ENCODE measurements at regions of chr5 and their contacts with region 1.

Region 1: GRCh38 chr5:112995764-112996618 is 19.4 kb downstream of the DCP2 start:
- DNase-seq: peak; percentile 61
- H3K4me3 Mint-ChIP-seq: no peak overlapping the region
- H3K27ac Mint-ChIP-seq: no peak overlapping the region
- H3K4me1 Mint-ChIP-seq: peaks cover 23% of the 10 kb centered on the region
- H3K27me3 Mint-ChIP-seq: no peaks in the 10 kb centered on the region

Region 2: DNA sequence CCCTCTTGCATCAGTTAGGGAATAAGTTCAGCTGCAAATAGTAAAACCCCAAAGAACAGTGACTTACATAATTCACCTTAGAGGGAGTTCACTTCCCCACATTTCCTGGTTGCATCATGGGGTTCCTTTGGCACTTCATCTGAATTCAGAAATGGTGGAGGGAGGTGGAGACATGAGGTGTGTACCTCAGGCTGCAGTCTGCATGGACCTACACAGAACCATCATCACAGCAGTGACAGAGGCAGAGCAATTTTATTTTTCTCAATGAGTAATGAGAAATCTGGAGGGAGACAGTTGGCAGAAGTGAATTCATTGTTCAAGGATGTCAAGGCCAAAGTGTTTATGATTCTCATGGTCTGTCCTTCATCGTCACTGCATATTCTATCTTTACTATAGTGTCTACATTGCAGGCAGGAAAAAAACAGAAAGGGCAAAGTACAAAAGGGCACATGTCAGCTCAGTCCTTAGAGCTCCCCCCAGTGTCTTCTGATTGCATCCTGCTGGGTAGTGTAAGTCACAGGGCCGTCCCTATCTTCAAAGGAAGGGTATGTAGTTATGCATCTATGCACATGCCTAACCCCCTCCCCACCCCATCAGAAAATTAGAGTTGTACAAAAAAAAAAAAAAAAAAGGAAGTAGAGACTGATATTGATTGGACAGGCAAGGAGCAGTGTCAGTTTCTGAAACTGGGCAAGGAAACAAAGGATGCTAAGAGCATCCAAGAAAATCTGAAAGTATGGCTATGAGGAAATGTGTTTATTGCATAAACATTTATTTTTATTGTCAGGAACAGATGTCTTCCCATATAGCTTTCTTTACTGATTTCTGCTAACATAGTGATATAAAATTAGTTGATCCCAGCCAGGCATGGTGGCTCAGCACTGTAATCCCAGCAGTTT is 391.0 kb before region 1 on chr5:
- intact Hi-C with region 1: no loop called
- DNase-seq: no peak
- H3K4me3 Mint-ChIP-seq: no peak overlapping the region
- H3K27ac Mint-ChIP-seq: no peak overlapping the region
- H3K4me1 Mint-ChIP-seq: no peaks in the 10 kb centered on the region
- H3K27me3 Mint-ChIP-seq: no peaks in the 10 kb centered on the region

Region 3: GRCh38 chr5:113090336-113091106 is 94.5 kb after region 1 on chr5:
- intact Hi-C with region 1: loop called (anchors 2 kb)
- DNase-seq: no peak
- H3K4me3 Mint-ChIP-seq: no peak overlapping the region
- H3K27ac Mint-ChIP-seq: no peak overlapping the region
- H3K4me1 Mint-ChIP-seq: no peaks in the 10 kb centered on the region
- H3K27me3 Mint-ChIP-seq: peaks cover 9% of the 10 kb centered on the region

Region 4: GRCh38 chr5:113294311-113295110 is 298.5 kb after region 1 on chr5:
- intact Hi-C with region 1: loop called (anchors 1 kb)
- DNase-seq: peak; percentile 62
- H3K4me3 Mint-ChIP-seq: peak overlapping the region; percentile 89
- H3K27ac Mint-ChIP-seq: peak overlapping the region; percentile 8
- H3K4me1 Mint-ChIP-seq: peaks cover 18% of the 10 kb centered on the region
- H3K27me3 Mint-ChIP-seq: peaks cover 69% of the 10 kb centered on the region

Region 5: GRCh38 chr5:113330533-113331208 is 334.7 kb after region 1 on chr5:
- intact Hi-C with region 1: loop called (anchors 1 kb)
- DNase-seq: no peak
- H3K4me3 Mint-ChIP-seq: no peak overlapping the region
- H3K27ac Mint-ChIP-seq: no peak overlapping the region
- H3K4me1 Mint-ChIP-seq: peaks cover 14% of the 10 kb centered on the region
- H3K27me3 Mint-ChIP-seq: peaks cover 6% of the 10 kb centered on the region

Region 6: GRCh38 chr5:113378959-113379541 is 383.1 kb after region 1 on chr5:
- intact Hi-C with region 1: loop called (anchors 2 kb)
- DNase-seq: peak; percentile 24
- H3K4me3 Mint-ChIP-seq: peak overlapping the region; percentile 24
- H3K27ac Mint-ChIP-seq: no peak overlapping the region
- H3K4me1 Mint-ChIP-seq: peaks cover 36% of the 10 kb centered on the region
- H3K27me3 Mint-ChIP-seq: peaks cover 21% of the 10 kb centered on the region